PC-9 (cell line): ENCODE measurements at regions of chr2 and their contacts with region 1.

Region 1: DNA sequence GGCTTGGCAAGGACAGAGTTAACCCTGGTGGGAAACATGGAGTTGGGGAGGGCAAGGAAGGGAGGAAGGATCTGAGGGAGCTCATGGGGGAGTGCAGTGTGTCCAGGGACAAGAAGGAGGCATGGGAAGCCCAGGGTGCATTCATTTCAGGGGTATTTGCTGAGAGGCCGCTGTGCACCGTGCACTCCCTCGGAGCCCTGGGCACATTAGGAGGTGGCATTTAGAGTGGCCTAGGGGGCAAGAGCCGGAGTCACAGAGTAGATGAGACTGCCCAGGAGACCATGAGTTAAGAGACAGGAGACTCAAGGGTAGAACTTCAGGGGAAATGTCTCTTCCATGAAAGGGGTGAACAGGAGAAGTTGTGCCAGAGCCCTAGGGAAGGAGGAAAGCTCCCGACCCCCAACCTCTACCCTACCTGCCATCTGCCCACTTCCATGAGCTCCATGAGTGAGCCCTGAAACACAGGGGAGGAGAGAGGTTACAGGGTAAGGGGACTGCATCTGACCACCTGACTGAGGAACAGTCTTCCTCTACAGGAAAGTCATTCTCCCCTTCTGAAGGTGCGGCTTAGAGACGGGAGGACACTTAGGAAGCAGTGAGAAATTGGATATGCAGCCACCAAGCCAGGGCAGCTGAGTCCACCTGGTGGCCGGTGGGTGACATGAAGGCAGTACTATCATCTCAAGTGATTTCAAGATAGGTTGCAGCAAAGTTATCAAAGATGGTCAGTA is 58.5 kb upstream of the COPS8 start:
- DNase-seq: peak; percentile 57 to 75
- H3K4me3 ChIP-seq: no peak overlapping the region
- H3K27ac ChIP-seq: no peak overlapping the region
- H3K4me1 ChIP-seq: peaks cover 23% of the 10 kb centered on the region
- H3K27me3 ChIP-seq: peaks cover 21% of the 10 kb centered on the region
- CTCF ChIP-seq: peak; percentile 96

Region 2: DNA sequence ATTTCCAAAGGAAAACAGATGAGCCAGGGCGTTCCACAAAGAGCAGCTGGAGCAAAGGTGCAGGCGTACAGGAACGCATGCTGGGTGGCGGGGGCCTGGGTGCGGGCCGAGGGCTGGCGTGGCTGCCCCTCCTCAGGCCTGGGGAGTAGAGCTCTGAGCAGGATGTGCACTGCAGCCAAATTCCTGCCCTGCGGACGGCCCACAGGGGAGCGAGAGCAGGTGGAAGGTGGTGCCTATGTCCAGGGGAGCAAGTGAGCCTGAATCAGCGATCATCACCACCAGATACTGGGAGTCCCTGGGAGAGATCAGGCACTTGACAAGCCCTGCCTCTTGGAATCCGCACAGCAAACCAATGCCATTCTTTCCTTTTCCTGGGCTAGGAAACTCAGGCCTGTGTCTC is 965.2 kb before region 1 on chr2:
- CTCF ChIA-PET with region 1: no interaction called
- POLR2A ChIA-PET with region 1: no interaction called
- intact Hi-C with region 1: no loop called
- DNase-seq: no peak
- H3K4me3 ChIP-seq: no peak overlapping the region
- H3K27ac ChIP-seq: no peak overlapping the region
- H3K4me1 ChIP-seq: no peaks in the 10 kb centered on the region
- H3K27me3 ChIP-seq: no peaks in the 10 kb centered on the region
- CTCF ChIP-seq: no peak

Region 3: DNA sequence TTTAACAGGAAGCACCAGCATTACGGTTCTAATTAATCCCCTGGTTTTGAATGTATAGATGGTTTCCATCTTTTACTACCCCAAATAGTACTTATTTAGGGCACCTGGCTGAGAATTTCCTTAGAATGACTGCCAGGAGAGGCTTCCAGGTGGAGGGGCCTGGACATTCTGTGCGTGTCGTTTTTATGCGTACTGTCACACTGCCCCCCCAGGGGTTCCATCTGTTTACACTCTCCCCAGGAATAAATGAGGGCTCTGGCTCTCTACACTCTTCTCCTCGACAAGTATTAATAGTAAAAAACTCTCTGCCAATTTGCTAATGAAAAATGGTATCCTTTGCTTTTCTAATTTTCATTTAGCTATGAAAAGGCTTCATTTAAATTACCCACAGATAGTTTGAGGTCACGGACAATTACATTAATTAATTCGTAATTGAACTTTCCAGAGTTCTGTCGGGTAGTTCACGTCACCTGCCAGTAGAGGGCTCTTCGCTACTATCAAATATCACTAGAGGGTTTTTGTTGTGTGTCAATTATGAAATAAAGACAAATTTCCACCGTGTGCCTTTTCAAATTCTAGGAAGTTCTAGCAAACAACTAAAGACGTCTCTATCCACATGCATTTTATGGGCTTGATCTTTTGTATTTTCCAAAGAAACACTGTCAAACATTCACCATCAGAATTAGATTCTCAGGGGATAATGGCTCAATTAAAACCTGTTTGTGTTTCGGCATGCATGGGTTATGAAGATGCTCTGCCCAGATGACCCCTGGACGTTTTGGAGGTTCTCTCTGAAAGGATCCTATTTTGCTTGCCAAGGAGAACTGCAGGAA is 674.2 kb before region 1 on chr2:
- CTCF ChIA-PET with region 1: no interaction called
- POLR2A ChIA-PET with region 1: no interaction called
- intact Hi-C with region 1: loop called (anchors 1 kb)
- DNase-seq: peak in 1 of 2 experiments; percentile 27
- H3K4me3 ChIP-seq: no peak overlapping the region
- H3K27ac ChIP-seq: no peak overlapping the region
- H3K4me1 ChIP-seq: no peaks in the 10 kb centered on the region
- H3K27me3 ChIP-seq: peaks cover 48% of the 10 kb centered on the region
- CTCF ChIP-seq: peak; percentile 98

Region 4: DNA sequence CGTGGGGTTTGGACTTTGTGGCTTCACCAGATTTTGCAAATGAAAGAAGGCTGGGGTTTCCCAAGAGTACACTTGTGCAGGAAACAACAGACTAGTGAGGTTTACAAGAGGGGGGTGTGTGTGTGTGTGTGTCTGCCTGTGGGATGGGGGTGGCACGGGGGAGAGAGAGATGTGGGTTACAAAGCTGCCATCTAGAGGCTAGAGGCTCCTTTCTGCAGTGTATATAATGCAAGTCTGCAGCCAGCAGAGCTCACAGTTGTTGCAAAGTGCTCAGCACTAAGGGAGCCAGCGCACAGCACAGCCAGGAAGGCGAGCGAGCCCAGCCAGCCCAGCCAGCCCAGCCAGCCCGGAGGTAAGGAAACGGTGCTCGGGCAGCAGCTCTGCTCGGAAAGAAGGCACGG is 457.6 kb before region 1 on chr2 and contains the start of gene ACKR3:
- CTCF ChIA-PET with region 1: interaction called, 4 read pairs
- POLR2A ChIA-PET with region 1: no interaction called
- intact Hi-C with region 1: loop called (anchors 1 kb)
- DNase-seq: peak; percentile 51 to 70
- H3K4me3 ChIP-seq: peak within 1 kb of the TSS; percentile 58
- H3K27ac ChIP-seq: no peak within 1 kb of the TSS
- H3K4me1 ChIP-seq: peaks cover 11% of the 10 kb centered on the region; the same call in 1 of the 2 replicates
- H3K27me3 ChIP-seq: peaks cover 53% of the 10 kb centered on the region
- CTCF ChIP-seq: peak; percentile 46; the same call in 1 of the 2 replicates
- total RNA-seq, gene ACKR3: 19.6 and 20.3 TPM in 2 replicates

Region 5: GRCh38 chr2:236678307-236678975 is 348.7 kb before region 1 on chr2:
- CTCF ChIA-PET with region 1: interaction called, 12 read pairs
- POLR2A ChIA-PET with region 1: no interaction called
- intact Hi-C with region 1: no loop called
- DNase-seq: no peak
- H3K4me3 ChIP-seq: no peak overlapping the region
- H3K27ac ChIP-seq: no peak overlapping the region
- H3K4me1 ChIP-seq: no peaks in the 10 kb centered on the region
- H3K27me3 ChIP-seq: peaks cover 8% of the 10 kb centered on the region; the same call in 1 of the 2 replicates
- CTCF ChIP-seq: no peak

Region 6: GRCh38 chr2:236769921-236770671 is 257.1 kb before region 1 on chr2:
- CTCF ChIA-PET with region 1: no interaction called
- POLR2A ChIA-PET with region 1: no interaction called
- intact Hi-C with region 1: loop called (anchors 1 kb)
- DNase-seq: peak; percentile 93 to 95
- H3K4me3 ChIP-seq: no peak overlapping the region
- H3K27ac ChIP-seq: peak overlapping the region; percentile 92
- H3K4me1 ChIP-seq: peaks cover 22% of the 10 kb centered on the region
- H3K27me3 ChIP-seq: no peaks in the 10 kb centered on the region
- CTCF ChIP-seq: no peak

Region 7: GRCh38 chr2:236871500-236872001 is 155.6 kb before region 1 on chr2:
- CTCF ChIA-PET with region 1: no interaction called
- POLR2A ChIA-PET with region 1: no interaction called
- intact Hi-C with region 1: loop called (anchors 5 kb)
- DNase-seq: peak; percentile 40 to 97
- H3K4me3 ChIP-seq: no peak overlapping the region
- H3K27ac ChIP-seq: peak overlapping the region; percentile 76
- H3K4me1 ChIP-seq: peaks cover 42% of the 10 kb centered on the region
- H3K27me3 ChIP-seq: peaks cover 21% of the 10 kb centered on the region; the same call in 1 of the 2 replicates
- CTCF ChIP-seq: no peak

Region 8: GRCh38 chr2:237000481-237000880 is 26.7 kb before region 1 on chr2:
- CTCF ChIA-PET with region 1: no interaction called
- POLR2A ChIA-PET with region 1: no interaction called
- intact Hi-C with region 1: no loop called
- DNase-seq: no peak
- H3K4me3 ChIP-seq: no peak overlapping the region
- H3K27ac ChIP-seq: no peak overlapping the region
- H3K4me1 ChIP-seq: peaks cover 24% of the 10 kb centered on the region
- H3K27me3 ChIP-seq: peaks cover 62% of the 10 kb centered on the region
- CTCF ChIP-seq: no peak

Region 9: DNA sequence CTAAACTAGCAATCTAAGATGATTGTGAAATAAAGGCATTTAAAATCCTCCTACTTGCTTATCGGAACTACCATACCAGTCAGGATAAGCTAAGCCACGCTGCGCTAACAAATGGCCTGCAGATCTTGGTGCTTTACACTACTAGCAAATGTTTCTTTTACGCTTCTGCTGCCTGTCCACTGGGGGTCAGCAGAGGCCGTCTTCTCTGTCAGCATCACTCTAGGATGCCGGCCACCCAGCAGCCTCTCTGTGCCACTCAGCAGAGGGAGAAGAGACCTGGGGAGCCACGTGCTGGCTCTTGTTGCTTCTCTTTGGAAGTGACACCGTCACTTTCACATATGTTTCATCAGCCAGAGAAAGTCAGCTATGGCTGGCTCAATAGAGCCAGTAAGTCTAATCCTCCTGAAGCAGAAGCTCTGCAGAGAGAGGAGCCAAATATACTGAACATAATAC is 95.1 kb after region 1 on chr2:
- CTCF ChIA-PET with region 1: no interaction called
- POLR2A ChIA-PET with region 1: no interaction called
- intact Hi-C with region 1: no loop called
- DNase-seq: peak; percentile 55 to 67
- H3K4me3 ChIP-seq: no peak overlapping the region
- H3K27ac ChIP-seq: peak overlapping the region; percentile 44
- H3K4me1 ChIP-seq: peaks cover 19% of the 10 kb centered on the region; the same call in 1 of the 2 replicates
- H3K27me3 ChIP-seq: no peaks in the 10 kb centered on the region
- CTCF ChIP-seq: peak; percentile 79